T-cell (primary cell): ENCODE measurements at regions of chr12 and their contacts with region 1.

Region 1: DNA sequence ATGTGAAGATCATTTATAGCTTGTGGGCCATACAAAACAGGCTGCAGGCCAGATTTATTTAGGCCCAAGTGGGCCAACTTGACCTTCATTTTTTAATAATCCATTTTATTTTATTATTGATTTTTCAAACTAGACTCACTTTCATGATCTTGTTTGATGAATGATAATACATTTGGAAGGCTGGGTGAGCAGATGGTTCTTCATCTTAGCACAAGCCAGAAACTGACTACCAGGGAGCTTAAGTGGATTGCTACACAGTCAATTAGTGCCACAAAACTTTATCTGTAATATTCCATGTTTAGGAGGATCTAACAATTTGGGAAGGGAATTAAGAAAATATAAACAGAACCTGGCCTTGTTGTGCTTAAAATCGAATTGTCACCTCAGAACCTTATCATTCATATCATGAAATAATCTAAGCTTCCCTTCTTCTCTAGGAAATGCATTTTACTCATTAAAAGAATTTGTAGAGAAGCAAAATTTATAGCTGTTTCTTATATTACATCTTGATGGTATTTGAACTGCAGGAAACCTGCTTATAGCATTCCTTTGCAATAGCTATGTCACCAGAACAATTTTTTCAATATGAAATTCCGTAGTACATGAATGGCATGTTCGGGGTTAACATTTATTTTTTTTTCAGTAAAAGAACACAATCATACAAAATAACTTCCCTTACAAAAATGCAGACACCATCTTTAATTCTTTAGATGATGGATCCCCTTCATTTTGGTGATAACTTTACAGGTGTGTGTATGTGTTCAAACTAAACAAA is 62.0 kb upstream of the CSRP2 start:
- DNase-seq: no peak
- ATAC-seq: no peak
- H3K4me3 ChIP-seq: no peak overlapping the region
- H3K4me3 Mint-ChIP-seq: no peak overlapping the region
- H3K27ac ChIP-seq: no peak overlapping the region
- H3K27ac Mint-ChIP-seq: no peak overlapping the region
- H3K4me1 ChIP-seq: no peaks in the 10 kb centered on the region
- H3K4me1 Mint-ChIP-seq: no peaks in the 10 kb centered on the region
- H3K27me3 ChIP-seq: peaks cover 0 to 8% of the 10 kb centered on the region in 2 experiments
- H3K27me3 Mint-ChIP-seq: no peaks in the 10 kb centered on the region

Region 2: DNA sequence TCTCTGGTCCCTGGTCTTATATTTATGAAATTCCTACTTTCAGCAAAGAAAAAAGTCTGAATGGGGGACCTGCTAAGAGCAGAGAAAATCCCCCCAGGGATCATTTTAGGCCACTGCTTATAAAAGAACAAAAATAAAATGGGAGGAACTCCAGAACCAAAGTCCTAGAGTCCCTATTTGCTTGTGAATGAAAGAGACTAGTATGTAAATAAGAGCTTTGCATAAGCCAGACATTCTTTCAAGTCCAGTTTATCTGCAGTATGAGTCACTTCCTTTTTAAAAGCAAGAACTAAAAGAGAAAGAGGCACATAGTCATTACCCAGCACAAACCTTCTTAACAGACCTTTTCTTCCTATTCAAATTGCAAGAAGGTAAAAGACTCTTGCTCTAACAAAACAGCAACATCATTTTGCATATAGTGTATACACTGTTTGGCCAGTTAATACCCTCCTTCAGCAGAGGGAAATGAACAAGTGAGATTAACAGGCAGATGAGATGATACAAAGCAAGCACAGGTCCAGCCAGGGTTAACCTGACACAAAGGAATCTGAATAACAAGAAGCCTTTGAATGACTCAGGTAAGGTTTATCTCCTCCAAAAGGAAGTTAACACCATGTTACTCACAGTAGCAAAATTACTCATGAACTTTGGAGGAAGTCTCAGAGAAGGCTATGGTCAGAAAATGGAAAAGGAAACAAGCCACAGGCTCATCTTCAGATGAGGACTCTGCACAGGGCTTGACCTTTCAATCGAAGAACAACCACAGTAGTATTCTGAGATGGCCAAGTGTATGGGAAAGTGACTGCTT is 996.6 kb before region 1 on chr12:
- CTCF ChIA-PET with region 1: no interaction called
- POLR2A ChIA-PET with region 1: no interaction called
- DNase-seq: peak in 1 of 35 experiments; percentile 46
- ATAC-seq: peak; percentile 87 to 95 (median 94)
- H3K4me3 ChIP-seq: no peak overlapping the region
- H3K4me3 Mint-ChIP-seq: peak overlapping the region in 2 of 3 donors; percentile 61 to 66
- H3K27ac ChIP-seq: peak overlapping the region; percentile 72
- H3K27ac Mint-ChIP-seq: peak overlapping the region; percentile 97
- H3K4me1 ChIP-seq: peaks cover 3 to 7% of the 10 kb centered on the region in 2 experiments
- H3K4me1 Mint-ChIP-seq: peaks cover 12 to 21% (median 20%) of the 10 kb centered on the region in 3 donors
- H3K27me3 ChIP-seq: no peaks in the 10 kb centered on the region
- H3K27me3 Mint-ChIP-seq: no peaks in the 10 kb centered on the region

Region 3: GRCh38 chr12:76920172-76921014 is 20.5 kb before region 1 on chr12:
- CTCF ChIA-PET with region 1: no interaction called
- POLR2A ChIA-PET with region 1: no interaction called
- DNase-seq: no peak
- ATAC-seq: peak in 1 of 4 experiments; percentile 46
- H3K4me3 ChIP-seq: no peak overlapping the region
- H3K4me3 Mint-ChIP-seq: no peak overlapping the region
- H3K27ac ChIP-seq: no peak overlapping the region
- H3K27ac Mint-ChIP-seq: no peak overlapping the region
- H3K4me1 ChIP-seq: peaks cover 0 to 3% of the 10 kb centered on the region in 2 experiments
- H3K4me1 Mint-ChIP-seq: peaks cover 0 to 11% (median 6%) of the 10 kb centered on the region in 3 donors
- H3K27me3 ChIP-seq: peaks cover 0 to 3% of the 10 kb centered on the region in 2 experiments
- H3K27me3 Mint-ChIP-seq: peaks cover 0 to 2% of the 10 kb centered on the region in 2 donors

Region 4: GRCh38 chr12:77102691-77103090 is 161.8 kb after region 1 on chr12:
- CTCF ChIA-PET with region 1: no interaction called
- POLR2A ChIA-PET with region 1: interaction called in 1 of 2 experiments, 10 read pairs
- DNase-seq: no peak
- ATAC-seq: no peak
- H3K4me3 ChIP-seq: no peak overlapping the region
- H3K4me3 Mint-ChIP-seq: no peak overlapping the region
- H3K27ac ChIP-seq: no peak overlapping the region
- H3K27ac Mint-ChIP-seq: no peak overlapping the region
- H3K4me1 ChIP-seq: no peaks in the 10 kb centered on the region
- H3K4me1 Mint-ChIP-seq: no peaks in the 10 kb centered on the region
- H3K27me3 ChIP-seq: peaks cover 0 to 3% of the 10 kb centered on the region in 2 experiments
- H3K27me3 Mint-ChIP-seq: peaks cover 10 to 17% of the 10 kb centered on the region in 2 donors